Activated T-helper 1 cell treated with anti-CD3 and anti-CD28 coated beads, Interleukin-12 subunit alpha, Interleukin-12 subunit beta, Interleukin-2, Interleukin-4 antibody, amounts not matched to agents 30 ng/mL and 10 ng/mL and 1 ng/mL, durations not matched to agents 14 hours and 24 hours and 36 hours (primary cell): ENCODE measurements at regions of chr2 and their contacts with region 1.

Region 1: GRCh38 chr2:32063310-32064161 is at the start of gene SPAST:
- DNase-seq: peak; percentile 96
- H3K4me3 Mint-ChIP-seq: peak within 1 kb of the TSS; percentile 97
- H3K27ac Mint-ChIP-seq: peak within 1 kb of the TSS; percentile 95
- H3K4me1 Mint-ChIP-seq: peaks cover 31% of the 10 kb centered on the region
- H3K27me3 Mint-ChIP-seq: peaks cover 6% of the 10 kb centered on the region
- total RNA-seq, gene SPAST: 18.9 and 21.0 TPM in 2 replicates

Region 2: DNA sequence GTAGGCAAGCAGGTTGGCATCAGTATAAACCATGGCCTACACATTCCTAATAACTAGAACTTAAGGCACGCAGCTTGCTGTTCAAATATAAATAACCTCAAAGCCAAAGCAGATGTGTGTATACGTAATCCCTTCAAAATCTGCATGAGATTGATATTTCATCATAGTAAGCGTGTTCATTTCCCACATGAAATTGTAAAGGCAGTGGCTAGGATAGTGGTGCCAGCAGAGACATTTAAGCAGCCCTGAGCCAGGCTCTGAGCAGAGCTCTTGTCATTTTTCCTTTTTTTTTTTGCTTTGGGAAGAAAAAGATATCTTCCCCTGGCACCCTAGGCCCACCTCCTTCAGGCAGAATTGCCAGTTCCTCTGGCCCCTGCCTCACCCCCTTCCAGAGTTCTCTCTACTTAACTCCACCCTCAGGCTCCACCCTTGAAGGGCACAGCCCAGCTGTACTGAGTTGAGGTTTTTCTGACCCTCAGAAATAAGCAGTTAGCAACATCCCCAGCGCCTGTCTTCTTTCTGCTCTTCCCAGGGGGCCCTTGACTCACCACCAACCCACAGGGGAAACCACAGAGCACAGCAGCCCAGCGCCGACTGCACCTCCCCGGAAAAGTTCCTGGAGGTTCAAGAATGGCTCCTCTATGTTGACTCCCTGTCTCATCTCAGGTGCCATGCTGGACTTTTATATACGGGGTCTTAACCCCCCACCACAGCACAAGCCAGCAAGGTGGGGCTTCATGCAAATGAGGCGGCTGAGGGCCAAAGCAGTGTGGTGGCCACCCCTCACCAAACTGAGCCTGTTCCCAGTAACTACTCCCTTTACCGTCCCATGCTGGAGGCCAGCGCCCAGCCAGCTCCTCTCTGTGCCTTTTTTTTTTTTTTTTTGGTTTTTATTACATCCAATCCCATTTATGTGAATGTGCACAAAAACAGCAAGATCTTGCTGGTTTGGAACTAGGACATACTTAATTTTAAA is 744.9 kb before region 1 on chr2:
- intact Hi-C with region 1: loop called (anchors 5 kb)
- DNase-seq: peak; percentile 44
- H3K4me3 Mint-ChIP-seq: peak overlapping the region; percentile 43
- H3K27ac Mint-ChIP-seq: peak overlapping the region; percentile 54
- H3K4me1 Mint-ChIP-seq: peaks cover 58% of the 10 kb centered on the region
- H3K27me3 Mint-ChIP-seq: peaks cover 4% of the 10 kb centered on the region

Region 3: DNA sequence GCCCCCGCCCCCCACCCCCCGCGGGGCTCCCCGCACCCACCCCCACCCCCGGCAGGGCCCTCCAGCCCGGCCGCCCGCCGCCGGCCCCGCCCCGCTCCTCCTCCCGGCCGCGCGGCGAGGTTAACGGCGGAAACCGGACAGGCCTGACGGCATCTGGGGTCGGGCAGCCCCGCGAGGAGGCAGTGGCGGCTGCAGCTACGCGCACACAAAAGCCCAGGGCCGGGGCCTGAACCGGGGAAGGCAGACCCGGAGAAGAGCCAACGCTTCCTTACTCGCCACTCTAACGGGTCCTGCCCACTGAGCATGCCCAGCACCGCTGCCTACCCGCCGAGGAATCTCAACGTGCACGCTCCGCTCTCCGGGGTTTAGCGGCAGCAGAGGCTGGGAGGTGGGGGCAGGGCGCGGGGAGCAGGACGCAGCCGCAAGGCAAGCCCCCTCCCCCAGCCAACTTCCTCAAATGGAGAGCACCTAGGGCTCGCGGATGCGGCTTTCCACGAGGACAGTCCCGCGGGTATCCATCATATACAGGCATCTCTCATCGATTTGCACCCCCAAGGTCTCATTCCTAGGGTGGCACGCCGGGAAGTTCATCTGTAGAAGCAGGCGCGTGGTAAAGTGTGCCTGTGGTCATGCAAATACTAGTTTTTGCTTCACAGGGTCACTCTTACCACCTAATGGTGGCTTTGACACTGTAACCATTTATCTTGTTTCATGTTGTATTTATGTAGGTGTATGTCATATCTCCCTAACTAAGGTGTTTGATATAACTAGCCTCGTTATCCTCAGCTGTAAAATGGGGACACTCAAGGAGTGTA is 52.7 kb before region 1 on chr2 and contains the start of gene MEMO1:
- intact Hi-C with region 1: loop called (anchors 1 kb)
- DNase-seq: peak; percentile 89
- H3K4me3 Mint-ChIP-seq: peak within 1 kb of the TSS; percentile 92
- H3K27ac Mint-ChIP-seq: peak within 1 kb of the TSS; percentile 97
- H3K4me1 Mint-ChIP-seq: peaks cover 41% of the 10 kb centered on the region
- H3K27me3 Mint-ChIP-seq: no peaks in the 10 kb centered on the region
- total RNA-seq, gene MEMO1: 66.6 and 71.3 TPM in 2 replicates

Region 4: DNA sequence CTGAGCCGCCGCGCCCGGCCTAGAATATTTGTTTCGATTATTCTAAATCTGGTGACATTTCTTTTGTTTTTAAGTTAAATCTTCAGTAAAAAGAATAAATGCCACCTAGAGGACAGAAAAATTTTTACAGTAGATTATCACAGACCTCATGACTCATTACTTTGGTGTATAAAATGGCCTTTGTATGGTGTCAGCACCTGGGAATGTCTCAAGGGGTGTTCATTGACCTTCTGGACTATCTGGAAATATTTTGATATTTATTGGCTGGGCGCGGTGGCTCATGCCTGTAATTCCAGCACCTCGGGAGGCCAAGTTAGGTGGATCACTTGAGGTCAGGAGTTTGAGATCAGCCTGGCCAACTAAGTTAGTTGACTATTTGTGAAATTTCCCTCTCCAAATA is 71.9 kb after region 1 on chr2:
- intact Hi-C with region 1: loop called (anchors 1 kb)
- DNase-seq: no peak
- H3K4me3 Mint-ChIP-seq: no peak overlapping the region
- H3K27ac Mint-ChIP-seq: no peak overlapping the region
- H3K4me1 Mint-ChIP-seq: no peaks in the 10 kb centered on the region
- H3K27me3 Mint-ChIP-seq: no peaks in the 10 kb centered on the region

Region 5: DNA sequence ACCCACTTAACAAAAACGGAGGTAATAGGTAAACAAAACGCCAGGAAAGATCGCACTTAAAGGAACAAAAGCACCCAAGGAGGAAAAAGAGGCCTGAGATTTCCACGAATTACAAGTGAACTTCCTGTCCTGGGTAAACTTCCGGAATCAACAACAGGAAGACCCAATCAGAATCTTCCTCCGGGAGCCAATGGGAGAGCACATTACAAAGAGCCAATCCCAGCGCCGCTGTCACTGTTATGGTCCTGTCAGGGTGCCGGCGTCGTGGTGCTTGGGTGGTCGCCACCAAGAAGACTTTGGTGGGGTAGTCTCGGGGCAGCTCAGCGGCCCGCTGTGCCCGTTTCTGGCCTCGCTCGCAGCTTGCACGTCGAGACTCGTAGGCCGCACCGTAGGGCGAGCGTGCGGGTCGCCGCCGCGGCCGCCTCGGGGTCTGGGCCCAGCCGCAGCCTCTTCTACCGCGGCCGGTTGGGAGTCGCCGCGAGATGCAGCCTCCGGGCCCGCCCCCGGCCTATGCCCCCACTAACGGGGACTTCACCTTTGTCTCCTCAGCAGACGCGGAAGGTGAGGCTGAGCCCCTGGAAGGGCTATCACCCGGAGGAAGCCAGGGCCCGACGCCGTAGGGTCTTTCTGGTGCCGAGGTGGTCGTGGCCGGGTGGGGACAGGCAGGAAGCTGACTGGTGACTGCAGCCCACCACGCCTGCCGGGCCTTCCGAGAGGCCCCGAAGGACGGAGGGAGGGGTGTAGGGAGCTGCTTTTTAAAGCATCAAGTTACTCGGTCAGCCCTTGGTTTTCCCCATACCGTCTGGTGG is 214.3 kb after region 1 on chr2 and contains the start of gene YIPF4:
- intact Hi-C with region 1: loop called (anchors 1 kb)
- DNase-seq: peak; percentile 84
- H3K4me3 Mint-ChIP-seq: peak within 1 kb of the TSS; percentile 89
- H3K27ac Mint-ChIP-seq: peak within 1 kb of the TSS; percentile 85
- H3K4me1 Mint-ChIP-seq: peaks cover 13% of the 10 kb centered on the region
- H3K27me3 Mint-ChIP-seq: peaks cover 4% of the 10 kb centered on the region
- total RNA-seq, gene YIPF4: 39.4 and 42.9 TPM in 2 replicates

Region 6: DNA sequence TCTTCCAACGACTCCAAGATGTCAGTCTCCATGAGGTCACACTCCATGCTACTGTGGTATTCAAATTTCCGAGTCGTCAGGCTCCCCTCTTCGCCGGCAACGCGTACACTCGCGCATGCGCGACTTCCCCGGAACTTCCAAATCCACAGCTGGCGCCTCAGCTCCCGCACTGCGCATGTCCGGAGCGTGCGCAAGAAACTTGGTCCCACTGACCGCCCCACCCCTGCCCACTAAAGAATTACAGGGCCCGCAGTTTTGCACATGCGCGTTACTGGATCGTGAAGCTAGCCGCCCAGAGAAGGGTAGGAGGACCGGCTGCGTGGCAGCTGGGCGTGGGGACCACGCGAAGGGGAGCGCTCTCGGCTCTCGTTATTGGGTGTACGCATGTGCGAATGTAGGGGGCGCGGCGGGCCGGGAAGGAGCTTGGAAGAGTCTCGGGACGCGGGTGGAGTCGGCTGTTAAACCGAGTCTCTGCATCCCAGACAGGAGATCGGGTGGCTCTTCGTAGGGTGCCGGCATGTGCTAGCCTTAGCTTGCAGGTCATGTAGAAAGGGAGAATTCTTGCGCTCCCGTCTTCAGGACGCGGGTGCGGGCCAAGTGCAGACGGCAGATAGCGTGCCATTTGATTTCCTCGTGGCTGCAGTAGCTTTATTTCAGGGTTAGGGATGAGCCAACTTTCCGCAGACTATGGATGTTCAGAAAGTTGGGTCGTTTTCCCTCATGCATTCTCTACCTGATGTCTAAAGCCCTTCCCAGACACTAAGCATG is 1535.8 kb after region 1 on chr2 and contains the start of gene FAM98A:
- intact Hi-C with region 1: loop called (anchors 1 kb)
- DNase-seq: peak; percentile 98
- H3K4me3 Mint-ChIP-seq: peak within 1 kb of the TSS; percentile 90
- H3K27ac Mint-ChIP-seq: peak within 1 kb of the TSS; percentile 94
- H3K4me1 Mint-ChIP-seq: peaks cover 35% of the 10 kb centered on the region
- H3K27me3 Mint-ChIP-seq: no peaks in the 10 kb centered on the region
- total RNA-seq, gene FAM98A: 58.1 and 59.8 TPM in 2 replicates